ENCODE measurements at regions of chr22 and their contacts with region 1.

Region 1: DNA sequence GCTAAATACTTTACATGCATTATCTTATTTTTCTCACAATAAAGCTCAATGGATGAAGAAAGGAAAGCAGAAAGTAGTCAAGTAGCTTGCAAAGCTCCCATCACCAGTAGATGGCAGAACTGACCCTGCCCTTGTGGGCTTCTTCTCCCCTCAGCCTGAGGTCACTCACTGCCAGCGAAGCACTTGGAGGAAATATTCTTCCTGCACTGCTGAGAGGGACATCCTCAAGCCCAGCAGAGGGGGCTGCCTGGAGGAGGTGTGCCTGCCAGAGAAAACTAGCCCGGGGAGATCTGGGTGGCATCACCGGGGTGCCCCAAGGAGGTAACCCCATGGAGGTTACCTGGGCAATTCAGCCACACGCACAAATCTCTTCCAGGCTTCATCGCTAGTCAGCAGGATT is 6.6 kb downstream of the APOL4 start:
- DNase-seq: peak; percentile 52 to 86 (median 73)
- H3K4me3 ChIP-seq: no peak overlapping the region
- H3K27ac ChIP-seq: peak overlapping the region in 1 of 5 donors; percentile 38
- H3K4me1 ChIP-seq: peaks cover 7 to 33% of the 10 kb centered on the region in 2 donors
- H3K27me3 ChIP-seq: no peaks in the 10 kb centered on the region
- CTCF ChIP-seq: peak; percentile 73 to 83 (median 78)
- POLR2A ChIP-seq: no peak

Region 2: GRCh38 chr22:35638410-35638809 is 556.6 kb before region 1 on chr22:
- intact Hi-C with region 1: no loop called
- DNase-seq: peak in 6 of 7 donors; percentile 50 to 88 (median 60)
- H3K4me3 ChIP-seq: no peak overlapping the region
- H3K27ac ChIP-seq: peak overlapping the region in 2 of 5 donors; percentile 60 to 76
- H3K4me1 ChIP-seq: peaks cover 0 to 16% of the 10 kb centered on the region in 2 donors
- H3K27me3 ChIP-seq: no peaks in the 10 kb centered on the region
- CTCF ChIP-seq: no peak
- POLR2A ChIP-seq: no peak

Region 3: DNA sequence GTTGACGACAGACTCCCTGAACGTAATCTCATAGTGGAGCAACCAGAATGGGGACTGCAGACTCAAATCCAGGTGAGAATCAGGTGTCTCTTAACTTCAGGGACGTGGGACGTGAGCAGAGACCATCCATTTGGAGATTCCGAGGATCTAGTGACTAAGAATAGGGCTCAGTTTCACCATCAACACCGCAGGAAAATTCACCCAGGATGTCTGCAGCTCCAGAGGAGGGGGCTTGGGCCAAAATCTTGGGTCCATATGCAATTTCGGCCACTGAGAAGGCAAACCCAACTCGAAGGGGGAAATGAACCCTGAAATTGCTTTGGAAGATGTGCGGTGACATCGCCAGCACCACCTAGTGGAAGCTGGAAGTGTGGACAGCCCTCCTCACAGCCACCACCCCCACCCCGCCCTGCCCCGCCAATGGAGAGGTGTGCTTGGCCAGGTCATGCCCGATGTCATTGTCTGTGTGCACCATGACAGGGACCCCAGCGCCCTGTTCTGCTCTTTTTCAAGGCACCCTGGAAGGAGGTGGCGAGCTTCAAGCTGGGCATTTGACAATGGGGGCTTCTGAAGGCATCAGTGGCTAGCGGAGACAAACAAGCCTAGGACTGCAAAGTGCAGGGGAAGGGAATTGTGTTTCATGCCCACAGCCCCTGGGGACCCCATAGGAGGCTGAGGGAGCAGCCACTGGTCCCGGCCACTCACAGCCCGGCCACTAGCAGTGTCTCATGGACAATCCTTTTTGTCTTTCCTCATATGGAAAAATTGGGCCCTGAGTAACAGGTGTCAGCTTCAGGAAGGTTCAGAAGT is 82.7 kb after region 1 on chr22:
- intact Hi-C with region 1: loop called (anchors 5 to 10 kb)
- DNase-seq: peak; percentile 39 to 81 (median 65)
- H3K4me3 ChIP-seq: no peak overlapping the region
- H3K27ac ChIP-seq: no peak overlapping the region
- H3K4me1 ChIP-seq: peaks cover 0 to 8% of the 10 kb centered on the region in 2 donors
- H3K27me3 ChIP-seq: no peaks in the 10 kb centered on the region
- CTCF ChIP-seq: peak; percentile 57 to 76 (median 66)
- POLR2A ChIP-seq: no peak

Region 4: GRCh38 chr22:36286471-36287224 is 91.7 kb after region 1 on chr22:
- intact Hi-C with region 1: loop called in 1 of 2 experiments (anchors 10 kb)
- DNase-seq: peak; percentile 81 to 93 (median 86)
- H3K4me3 ChIP-seq: no peak overlapping the region
- H3K27ac ChIP-seq: peak overlapping the region in 4 of 5 donors; percentile 52 to 87 (median 68)
- H3K4me1 ChIP-seq: peaks cover 12 to 19% of the 10 kb centered on the region in 2 donors
- H3K27me3 ChIP-seq: no peaks in the 10 kb centered on the region
- CTCF ChIP-seq: peak; percentile 85 to 94 (median 90)
- POLR2A ChIP-seq: no peak

Region 5: DNA sequence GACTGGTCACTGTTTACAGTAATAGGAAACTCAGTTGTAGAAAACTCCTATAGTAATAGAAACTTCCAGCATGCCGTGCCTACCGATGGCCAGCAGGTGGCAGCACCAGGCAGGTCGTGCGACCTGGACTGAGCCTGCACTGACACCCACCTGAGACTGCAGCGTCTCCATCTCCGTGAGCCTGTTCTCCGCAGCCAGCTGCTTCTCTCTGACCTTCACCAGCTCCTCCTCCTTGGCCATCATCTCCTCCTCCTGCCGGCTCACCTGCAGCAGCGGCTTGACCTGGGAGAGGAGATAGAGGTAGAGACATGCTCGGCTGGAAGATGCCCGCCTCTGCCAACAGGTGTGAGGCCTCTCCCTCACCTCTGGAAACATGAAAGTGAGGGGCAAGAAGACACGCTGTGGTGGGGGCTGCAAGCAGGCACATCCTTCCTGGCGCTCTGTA is 106.4 kb after region 1 on chr22:
- intact Hi-C with region 1: no loop called
- DNase-seq: peak; percentile 66 to 91 (median 80)
- H3K4me3 ChIP-seq: no peak overlapping the region
- H3K27ac ChIP-seq: no peak overlapping the region
- H3K4me1 ChIP-seq: no peaks in the 10 kb centered on the region
- H3K27me3 ChIP-seq: no peaks in the 10 kb centered on the region
- CTCF ChIP-seq: peak; percentile 88 to 96 (median 93)
- POLR2A ChIP-seq: no peak

Region 6: DNA sequence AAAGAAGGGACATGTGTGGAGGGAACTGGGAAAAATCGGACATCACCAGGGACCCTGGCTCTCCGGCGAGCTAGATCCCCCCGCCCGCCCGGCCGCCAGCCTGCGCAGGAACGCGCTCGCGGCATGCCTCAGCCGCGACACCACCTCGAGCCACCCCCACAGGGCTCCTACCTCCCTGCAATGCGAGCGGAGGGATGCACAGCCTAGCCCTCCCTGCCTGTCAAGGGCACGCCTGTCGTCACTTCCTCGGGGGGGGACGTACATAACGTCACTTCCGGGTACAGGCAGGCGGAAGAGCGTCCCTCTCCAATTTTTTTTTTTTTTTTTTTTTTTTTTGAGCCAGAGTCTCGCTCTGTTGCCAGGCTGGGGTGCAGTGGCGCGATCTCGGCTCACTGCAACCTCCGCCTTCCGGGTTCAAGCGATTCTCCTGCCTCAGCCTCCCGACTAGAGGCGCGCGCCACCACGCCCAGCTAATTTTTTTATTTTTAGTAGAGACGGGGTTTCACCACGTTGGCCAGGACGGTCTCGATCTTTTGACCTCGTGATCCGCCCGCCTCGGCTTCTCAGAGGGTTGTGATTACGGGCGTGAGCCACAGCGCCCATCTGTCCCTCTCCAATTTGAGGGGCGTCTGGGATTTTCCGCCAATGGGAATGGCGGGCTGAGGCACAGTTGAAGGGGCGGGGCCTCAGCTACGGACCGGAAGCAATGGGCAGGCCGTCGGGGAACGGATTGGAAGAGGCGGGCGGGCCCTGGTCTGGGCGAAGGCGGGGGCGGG is 286.6 kb after region 1 on chr22 and contains the start of gene TXN2:
- intact Hi-C with region 1: loop called in 1 of 2 experiments (anchors 10 kb)
- DNase-seq: peak; percentile 96 to 99 (median 98)
- H3K4me3 ChIP-seq: peak within 1 kb of the TSS; percentile 16 to 60 (median 45)
- H3K27ac ChIP-seq: peak within 1 kb of the TSS; percentile 97 to 100 (median 99)
- H3K4me1 ChIP-seq: peaks cover 28 to 39% of the 10 kb centered on the region in 2 donors
- H3K27me3 ChIP-seq: no peaks in the 10 kb centered on the region
- CTCF ChIP-seq: peak in 1 of 6 experiments; percentile 1
- POLR2A ChIP-seq: peak; percentile 85 to 97
- total RNA-seq, gene TXN2: 160 to 245 (median 189) TPM

Measured in adrenal gland (tissue), 19 donors.